CD4-positive, alpha-beta memory T cell (primary cell): ENCODE measurements at regions of chr19 and their contacts with region 1.

Region 1: GRCh38 chr19:15288146-15288963 is 44.0 kb downstream of the BRD4 start:
- DNase-seq: no peak
- H3K4me3 ChIP-seq: no peak overlapping the region
- H3K4me3 Mint-ChIP-seq: peak overlapping the region in 7 of 8 donors; percentile 68 to 81 (median 72)
- H3K27ac ChIP-seq: peak overlapping the region; percentile 14
- H3K27ac Mint-ChIP-seq: peak overlapping the region; percentile 16 to 92 (median 67)
- H3K4me1 ChIP-seq: peaks cover 96% of the 10 kb centered on the region
- H3K4me1 Mint-ChIP-seq: peaks cover 83 to 100% (median 93%) of the 10 kb centered on the region in 4 donors
- H3K27me3 ChIP-seq: no peaks in the 10 kb centered on the region
- H3K27me3 Mint-ChIP-seq: no peaks in the 10 kb centered on the region

Region 2: GRCh38 chr19:15323496-15324227 is 35.3 kb after region 1 on chr19:
- CTCF ChIA-PET with region 1: no interaction called
- POLR2A ChIA-PET with region 1: interaction called, 3 read pairs
- intact Hi-C with region 1: loop called (anchors 5 kb)
- DNase-seq: no peak
- H3K4me3 ChIP-seq: no peak overlapping the region
- H3K4me3 Mint-ChIP-seq: peak overlapping the region in 7 of 8 donors; percentile 33 to 79 (median 70)
- H3K27ac ChIP-seq: no peak overlapping the region
- H3K27ac Mint-ChIP-seq: peak overlapping the region; percentile 35 to 78 (median 64)
- H3K4me1 ChIP-seq: peaks cover 95% of the 10 kb centered on the region
- H3K4me1 Mint-ChIP-seq: peaks cover 67 to 95% (median 83%) of the 10 kb centered on the region in 4 donors
- H3K27me3 ChIP-seq: no peaks in the 10 kb centered on the region
- H3K27me3 Mint-ChIP-seq: no peaks in the 10 kb centered on the region

Region 3: GRCh38 chr19:15332311-15332996 is 44.1 kb after region 1 on chr19 and contains the start of gene BRD4:
- CTCF ChIA-PET with region 1: no interaction called
- POLR2A ChIA-PET with region 1: interaction called, 4 read pairs
- intact Hi-C with region 1: loop called (anchors 5 kb)
- DNase-seq: peak; percentile 69 to 82 (median 78)
- H3K4me3 ChIP-seq: peak within 1 kb of the TSS; percentile 84 to 87
- H3K4me3 Mint-ChIP-seq: peak within 1 kb of the TSS; percentile 94 to 97 (median 95)
- H3K27ac ChIP-seq: peak within 1 kb of the TSS; percentile 90
- H3K27ac Mint-ChIP-seq: peak within 1 kb of the TSS; percentile 91 to 99 (median 96)
- H3K4me1 ChIP-seq: peaks cover 46% of the 10 kb centered on the region
- H3K4me1 Mint-ChIP-seq: peaks cover 25 to 55% (median 39%) of the 10 kb centered on the region in 4 donors
- H3K27me3 ChIP-seq: no peaks in the 10 kb centered on the region
- H3K27me3 Mint-ChIP-seq: no peaks in the 10 kb centered on the region
- total RNA-seq, gene BRD4: 149 to 152 TPM

Region 4: GRCh38 chr19:15466851-15467733 is 178.7 kb after region 1 on chr19:
- CTCF ChIA-PET with region 1: no interaction called
- POLR2A ChIA-PET with region 1: no interaction called
- intact Hi-C with region 1: no loop called
- DNase-seq: peak; percentile 56 to 89 (median 65)
- H3K4me3 ChIP-seq: no peak overlapping the region
- H3K4me3 Mint-ChIP-seq: peak overlapping the region; percentile 74 to 89 (median 78)
- H3K27ac ChIP-seq: peak overlapping the region; percentile 38
- H3K27ac Mint-ChIP-seq: peak overlapping the region; percentile 83 to 97 (median 91)
- H3K4me1 ChIP-seq: peaks cover 71% of the 10 kb centered on the region
- H3K4me1 Mint-ChIP-seq: peaks cover 38 to 74% (median 55%) of the 10 kb centered on the region in 4 donors
- H3K27me3 ChIP-seq: no peaks in the 10 kb centered on the region
- H3K27me3 Mint-ChIP-seq: no peaks in the 10 kb centered on the region